Heart left ventricle (tissue), 16 donors: ENCODE measurements at regions of chr14 and their contacts with region 1.

Region 1: DNA sequence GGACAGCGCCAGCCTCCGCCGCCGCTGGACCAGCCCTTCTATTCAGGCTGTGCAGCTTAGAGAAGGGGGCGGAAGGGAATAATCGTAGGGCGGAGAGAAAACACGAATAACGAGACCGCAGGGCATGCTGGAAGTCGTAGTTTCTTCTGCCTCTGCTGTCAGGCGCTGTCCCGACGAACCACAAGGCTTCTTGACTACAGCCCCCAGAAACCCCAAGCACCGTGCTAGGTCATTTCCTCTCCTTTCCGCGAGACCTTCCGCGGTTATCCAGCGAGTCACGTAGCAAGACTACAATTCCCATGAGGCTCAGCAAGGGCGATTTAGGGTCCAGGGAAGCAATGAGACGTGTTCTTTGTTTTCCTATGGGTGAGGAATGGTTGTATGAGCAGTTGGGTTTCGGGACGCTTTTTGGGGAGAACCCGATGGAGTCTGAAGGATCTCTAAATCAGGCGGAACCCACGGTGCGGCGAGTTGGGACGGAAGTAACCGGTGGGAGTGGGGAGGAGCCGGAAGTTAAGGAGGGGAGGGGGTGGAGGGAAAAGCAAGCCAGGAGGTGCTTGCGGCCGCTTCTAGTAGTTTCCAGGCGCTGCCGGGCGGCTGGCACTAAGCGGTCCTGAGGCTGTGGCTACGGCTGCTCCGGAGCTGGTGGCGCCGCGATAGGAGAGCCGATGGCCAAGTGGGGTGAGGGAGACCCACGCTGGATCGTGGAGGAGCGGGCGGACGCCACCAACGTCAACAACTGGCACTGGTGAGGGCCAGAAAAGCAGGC is at the starts of genes AHSA1 and VIPAS39:
- DNase-seq: peak; percentile 93 to 97 (median 97)
- ATAC-seq: peak; percentile 98 to 99 (median 98)
- H3K4me3 ChIP-seq: peak within 1 kb of the TSS; percentile 70 to 98 (median 92)
- H3K27ac ChIP-seq: peak within 1 kb of the TSS; percentile 87 to 97 (median 95)
- H3K4me1 ChIP-seq: peaks cover 2 to 30% (median 21%) of the 10 kb centered on the region in 12 donors
- H3K27me3 ChIP-seq: no peaks in the 10 kb centered on the region
- CTCF ChIP-seq: no peak
- POLR2A ChIP-seq: peak in 1 of 2 donors; percentile 71
- total RNA-seq, gene AHSA1: 112 to 210 (median 152) TPM
- total RNA-seq, gene VIPAS39: 9.7 to 18.4 (median 14.4) TPM

Region 2: DNA sequence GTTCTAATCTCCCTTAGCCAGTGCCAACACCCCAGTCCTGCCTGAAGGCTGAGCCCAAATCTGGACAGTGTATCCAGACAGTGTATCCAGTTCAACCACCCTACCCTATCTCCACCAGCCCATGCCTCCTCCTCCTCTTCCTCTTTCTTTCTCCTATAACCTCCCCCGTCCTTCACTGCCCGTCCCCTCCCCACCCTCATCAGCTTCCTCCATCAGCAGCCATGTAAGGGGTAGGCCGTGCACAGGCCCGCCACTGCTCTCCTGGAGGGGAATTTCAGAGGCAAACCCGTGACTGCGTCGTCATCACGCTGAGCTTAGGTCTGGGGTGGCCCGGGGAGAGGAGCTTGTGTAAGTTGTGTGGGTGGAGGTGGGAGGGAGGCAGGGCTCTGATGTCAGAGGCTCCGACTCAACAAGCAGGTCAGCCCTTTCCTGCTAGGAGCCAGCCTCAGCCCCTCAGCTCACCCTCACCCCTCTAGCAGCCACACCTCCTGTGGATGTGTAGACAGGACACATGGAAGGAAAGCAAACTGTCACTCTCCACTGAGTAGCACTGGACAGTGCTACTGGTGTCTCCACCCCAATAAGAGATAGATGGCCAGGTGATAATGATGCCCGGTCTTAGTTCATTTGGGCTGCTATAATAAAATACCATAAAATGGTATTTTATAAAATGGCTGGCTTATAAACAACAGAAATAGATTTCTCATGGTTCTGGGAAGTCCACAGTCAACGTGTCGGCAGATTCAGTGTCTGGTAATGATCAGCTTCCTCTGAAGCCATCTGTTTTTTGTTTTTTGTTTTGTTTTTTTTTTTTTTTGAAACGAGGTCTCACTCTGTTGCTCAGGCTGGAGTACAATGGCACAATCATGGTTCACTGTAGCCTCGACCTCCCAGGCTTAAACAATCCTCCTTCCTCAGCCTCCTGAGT is 479.6 kb before region 1 on chr14:
- intact Hi-C with region 1: no loop called
- DNase-seq: peak; percentile 36 to 82 (median 70)
- ATAC-seq: peak; percentile 26 to 87 (median 82)
- H3K4me3 ChIP-seq: no peak overlapping the region
- H3K27ac ChIP-seq: peak overlapping the region in 3 of 12 donors; percentile 39 to 81 (median 42)
- H3K4me1 ChIP-seq: peaks cover 0 to 16% (median 0%) of the 10 kb centered on the region in 12 donors
- H3K27me3 ChIP-seq: no peaks in the 10 kb centered on the region
- CTCF ChIP-seq: no peak
- POLR2A ChIP-seq: no peak

Region 3: GRCh38 chr14:77320238-77320935 is 137.3 kb before region 1 on chr14 and contains the start of gene POMT2:
- intact Hi-C with region 1: loop called in 6 of 10 experiments (anchors 1 to 5 kb)
- DNase-seq: peak; percentile 94 to 98 (median 96)
- ATAC-seq: peak; percentile 62 to 86 (median 80)
- H3K4me3 ChIP-seq: peak within 1 kb of the TSS; percentile 79 to 99 (median 90)
- H3K27ac ChIP-seq: peak within 1 kb of the TSS; percentile 92 to 99 (median 96)
- H3K4me1 ChIP-seq: peaks cover 0 to 37% (median 17%) of the 10 kb centered on the region in 12 donors
- H3K27me3 ChIP-seq: no peaks in the 10 kb centered on the region
- CTCF ChIP-seq: peak; percentile 18 to 70 (median 54)
- POLR2A ChIP-seq: peak in 1 of 2 donors; percentile 80
- total RNA-seq, gene POMT2: 7.3 to 27.6 (median 15.3) TPM

Region 4: DNA sequence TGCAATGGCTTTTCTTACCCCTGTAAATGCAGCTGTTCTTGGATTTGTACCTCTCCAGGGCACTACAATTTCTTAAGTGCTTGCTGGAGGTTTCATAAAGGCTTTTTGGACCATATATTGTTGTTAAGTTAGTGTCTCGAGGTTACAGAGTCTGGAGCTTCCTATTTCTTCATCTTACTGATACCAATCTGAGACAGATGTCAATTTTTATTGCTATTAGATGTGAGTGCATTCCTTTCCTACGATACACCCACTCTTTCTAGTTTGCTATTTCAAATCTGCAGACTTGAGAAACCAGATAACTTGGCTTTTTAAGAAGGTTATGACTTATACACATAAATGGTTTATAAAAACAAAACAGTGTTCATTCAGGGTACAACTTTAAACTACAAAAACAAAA is 36.5 kb before region 1 on chr14:
- intact Hi-C with region 1: no loop called
- DNase-seq: no peak
- ATAC-seq: no peak
- H3K4me3 ChIP-seq: no peak overlapping the region
- H3K27ac ChIP-seq: no peak overlapping the region
- H3K4me1 ChIP-seq: no peaks in the 10 kb centered on the region
- H3K27me3 ChIP-seq: no peaks in the 10 kb centered on the region
- CTCF ChIP-seq: no peak
- POLR2A ChIP-seq: no peak

Region 5: DNA sequence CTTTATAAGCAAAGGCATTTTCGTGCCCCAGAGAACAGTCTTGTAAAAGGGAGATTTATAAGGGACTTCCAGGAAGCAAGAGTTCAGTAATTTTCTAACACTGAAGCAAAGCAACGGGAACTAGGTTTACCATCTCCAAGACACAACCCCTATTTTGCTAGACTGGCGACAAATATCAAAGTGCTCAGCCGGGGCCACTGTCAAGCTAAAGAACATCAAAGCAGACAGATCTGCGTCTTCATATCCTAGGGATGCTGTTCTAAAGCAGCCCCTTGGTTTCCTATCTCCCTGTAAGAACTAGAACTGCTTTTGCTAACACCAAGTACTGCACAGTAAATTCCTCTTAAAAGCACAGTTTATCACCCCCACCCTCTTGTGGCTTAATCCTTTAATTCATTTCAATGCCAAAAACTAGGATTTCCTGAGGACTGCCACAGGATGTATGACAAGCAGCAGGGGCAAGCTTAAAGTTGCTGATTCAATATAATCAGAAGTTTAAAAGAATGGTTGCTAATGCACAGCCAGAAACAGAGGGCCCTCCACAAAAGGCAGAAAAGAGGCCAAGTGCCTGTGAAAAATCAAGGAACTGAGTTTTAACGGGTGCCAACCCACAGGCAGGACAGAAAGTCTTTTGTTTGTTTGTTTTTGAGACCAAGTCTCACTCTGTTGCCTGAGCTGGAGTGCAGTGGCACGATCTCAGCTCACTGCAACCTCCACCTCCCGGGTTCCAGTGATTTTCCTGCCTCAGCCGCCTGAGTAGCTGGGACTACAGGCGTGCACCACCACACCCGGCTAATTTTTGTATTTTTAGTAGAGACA is 84.9 kb after region 1 on chr14:
- intact Hi-C with region 1: loop called in 3 of 10 experiments (anchors 5 to 10 kb)
- DNase-seq: no peak
- ATAC-seq: peak in 2 of 4 donors; percentile 59 to 76
- H3K4me3 ChIP-seq: no peak overlapping the region
- H3K27ac ChIP-seq: peak overlapping the region in 8 of 12 donors; percentile 27 to 73 (median 36)
- H3K4me1 ChIP-seq: peaks cover 0 to 37% (median 5%) of the 10 kb centered on the region in 12 donors
- H3K27me3 ChIP-seq: no peaks in the 10 kb centered on the region
- CTCF ChIP-seq: no peak
- POLR2A ChIP-seq: no peak

Region 6: DNA sequence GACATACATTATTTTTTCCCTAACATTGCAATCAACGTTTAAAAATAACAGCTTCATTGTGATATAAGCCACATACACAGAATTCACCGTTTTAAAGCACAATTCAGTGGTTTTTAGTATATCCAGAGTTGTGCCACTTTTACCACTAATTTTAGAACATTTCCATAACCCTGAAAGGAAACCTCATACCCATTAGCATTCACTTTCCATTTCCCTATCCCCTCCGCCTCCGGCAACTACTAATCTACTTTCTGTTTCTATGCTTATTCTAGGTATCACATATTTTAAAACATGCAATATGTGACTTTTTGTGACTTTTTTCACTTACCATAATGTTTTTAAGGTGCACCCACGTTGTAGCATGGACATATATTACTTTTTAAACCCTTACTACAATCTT is 96.5 kb after region 1 on chr14:
- intact Hi-C with region 1: loop called in 7 of 10 experiments (anchors 5 to 10 kb)
- DNase-seq: no peak
- ATAC-seq: peak in 1 of 4 donors; percentile 50
- H3K4me3 ChIP-seq: peak overlapping the region in 1 of 12 donors; percentile 23
- H3K27ac ChIP-seq: peak overlapping the region in 8 of 12 donors; percentile 6 to 83 (median 23)
- H3K4me1 ChIP-seq: peaks cover 0 to 39% (median 2%) of the 10 kb centered on the region in 12 donors
- H3K27me3 ChIP-seq: no peaks in the 10 kb centered on the region
- CTCF ChIP-seq: no peak
- POLR2A ChIP-seq: no peak

Region 7: GRCh38 chr14:77707724-77708408 is 250.2 kb after region 1 on chr14 and contains the starts of genes ALKBH1 and SLIRP:
- intact Hi-C with region 1: loop called in 6 of 10 experiments (anchors 2 to 10 kb)
- DNase-seq: peak; percentile 88 to 92 (median 90)
- ATAC-seq: peak; percentile 96 to 98 (median 98)
- H3K4me3 ChIP-seq: peak within 1 kb of the TSS; percentile 61 to 97 (median 91)
- H3K27ac ChIP-seq: peak within 1 kb of the TSS; percentile 20 to 82 (median 70)
- H3K4me1 ChIP-seq: peaks cover 0 to 37% (median 27%) of the 10 kb centered on the region in 12 donors
- H3K27me3 ChIP-seq: no peaks in the 10 kb centered on the region
- CTCF ChIP-seq: peak in 1 of 12 donors; percentile 1
- POLR2A ChIP-seq: peak in 1 of 2 donors; percentile 58
- total RNA-seq, gene ALKBH1: 10.8 to 16.5 (median 12.5) TPM
- total RNA-seq, gene SLIRP: 112 to 309 (median 169) TPM